ENCODE measurements at regions of chr2 and their contacts with region 1.

Region 1: DNA sequence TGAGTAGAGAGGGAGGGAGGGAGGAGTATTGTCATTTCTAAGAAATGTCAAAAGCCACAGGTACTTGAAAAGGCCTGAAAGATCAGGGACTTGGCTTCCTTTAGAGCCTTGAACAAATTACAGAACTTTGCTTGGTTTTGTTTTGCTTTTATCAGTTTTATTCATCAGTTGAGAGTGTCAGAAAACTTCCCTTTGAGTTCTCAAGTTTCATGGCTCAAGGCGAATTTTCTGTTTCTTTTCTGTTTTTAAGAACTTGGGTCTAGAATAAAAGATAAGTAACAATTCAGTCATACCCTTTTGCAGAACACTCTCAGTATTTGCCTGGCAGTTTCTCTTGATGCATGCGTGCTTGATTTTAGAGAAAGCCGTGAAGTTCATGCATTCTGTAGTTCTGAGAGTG is 531.9 kb downstream of the PARD3B start:
- DNase-seq: peak in 7 of 9 donors; percentile 41 to 85 (median 73)
- ATAC-seq: peak; percentile 86
- H3K4me3 ChIP-seq: no peak overlapping the region
- H3K4me3 Mint-ChIP-seq: peak overlapping the region; percentile 38 to 81 (median 70)
- H3K27ac ChIP-seq: peak overlapping the region; percentile 72
- H3K27ac Mint-ChIP-seq: peak overlapping the region; percentile 81 to 99 (median 94)
- H3K4me1 ChIP-seq: peaks cover 0 to 30% of the 10 kb centered on the region in 2 donors
- H3K4me1 Mint-ChIP-seq: peaks cover 23 to 82% (median 73%) of the 10 kb centered on the region in 7 donors
- H3K27me3 ChIP-seq: no peaks in the 10 kb centered on the region
- H3K27me3 Mint-ChIP-seq: no peaks in the 10 kb centered on the region

Region 2: GRCh38 chr2:204950671-204951346 is 126.3 kb before region 1 on chr2:
- CTCF ChIA-PET with region 1: no interaction called
- POLR2A ChIA-PET with region 1: no interaction called
- intact Hi-C with region 1: loop called (anchors 1 to 5 kb)
- DNase-seq: no peak
- ATAC-seq: no peak
- H3K4me3 ChIP-seq: no peak overlapping the region
- H3K4me3 Mint-ChIP-seq: peak overlapping the region in 1 of 10 donors; percentile 24
- H3K27ac ChIP-seq: no peak overlapping the region
- H3K27ac Mint-ChIP-seq: peak overlapping the region in 7 of 9 donors; percentile 27 to 84 (median 73)
- H3K4me1 ChIP-seq: peaks cover 6 to 37% of the 10 kb centered on the region in 2 donors
- H3K4me1 Mint-ChIP-seq: peaks cover 30 to 76% (median 64%) of the 10 kb centered on the region in 7 donors
- H3K27me3 ChIP-seq: no peaks in the 10 kb centered on the region
- H3K27me3 Mint-ChIP-seq: no peaks in the 10 kb centered on the region

Region 3: DNA sequence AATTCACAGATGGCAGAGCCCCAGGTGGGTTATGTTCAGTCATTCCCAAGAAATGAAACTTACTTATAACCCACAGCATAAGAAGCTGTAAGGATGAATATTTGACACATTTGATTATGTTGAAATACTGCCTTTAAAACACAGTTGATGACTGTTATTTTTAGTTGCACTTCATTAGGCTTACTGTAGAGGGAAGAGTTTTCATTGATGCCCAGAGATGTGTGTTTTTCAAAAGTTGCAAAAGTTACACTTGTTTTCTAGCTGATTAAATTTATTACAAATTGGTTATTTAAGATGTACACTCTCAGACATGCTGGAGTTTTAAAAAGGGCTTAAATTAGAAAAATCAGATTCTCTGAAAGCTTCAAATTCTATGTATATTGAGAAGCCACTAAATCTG is 25.7 kb before region 1 on chr2:
- CTCF ChIA-PET with region 1: interaction called, 3 read pairs
- POLR2A ChIA-PET with region 1: no interaction called
- intact Hi-C with region 1: loop called in 1 of 2 experiments (anchors 2 kb)
- DNase-seq: peak in 4 of 9 donors; percentile 18 to 21 (median 19)
- ATAC-seq: no peak
- H3K4me3 ChIP-seq: no peak overlapping the region
- H3K4me3 Mint-ChIP-seq: no peak overlapping the region
- H3K27ac ChIP-seq: no peak overlapping the region
- H3K27ac Mint-ChIP-seq: no peak overlapping the region
- H3K4me1 ChIP-seq: no peaks in the 10 kb centered on the region
- H3K4me1 Mint-ChIP-seq: peaks cover 2 to 41% (median 32%) of the 10 kb centered on the region in 7 donors
- H3K27me3 ChIP-seq: no peaks in the 10 kb centered on the region
- H3K27me3 Mint-ChIP-seq: no peaks in the 10 kb centered on the region

Region 4: DNA sequence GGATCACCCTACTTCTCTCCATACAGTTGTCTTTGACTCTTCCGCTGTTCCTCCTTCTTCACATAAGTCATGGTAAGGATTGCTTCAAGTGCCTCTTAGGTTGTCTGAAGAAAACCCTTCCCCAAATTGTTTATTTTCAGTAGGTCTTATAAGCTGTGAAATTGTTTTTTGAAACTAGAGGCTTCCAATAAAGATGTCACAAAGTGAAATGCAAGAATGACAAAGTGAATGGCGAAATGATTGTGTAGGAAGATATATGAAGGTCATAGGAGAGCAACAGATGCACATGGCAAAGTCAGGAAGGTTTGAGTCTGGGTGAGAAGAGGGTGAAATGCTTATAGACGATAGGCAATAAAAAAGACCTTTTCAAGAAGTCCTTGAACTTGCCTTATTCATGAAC is 16.9 kb after region 1 on chr2:
- CTCF ChIA-PET with region 1: interaction called, 4 read pairs
- POLR2A ChIA-PET with region 1: no interaction called
- intact Hi-C with region 1: loop called in 1 of 2 experiments (anchors 2 kb)
- DNase-seq: no peak
- ATAC-seq: no peak
- H3K4me3 ChIP-seq: no peak overlapping the region
- H3K4me3 Mint-ChIP-seq: peak overlapping the region in 1 of 10 donors; percentile 1
- H3K27ac ChIP-seq: no peak overlapping the region
- H3K27ac Mint-ChIP-seq: peak overlapping the region in 2 of 9 donors; percentile 9 to 45
- H3K4me1 ChIP-seq: peaks cover 0 to 18% of the 10 kb centered on the region in 2 donors
- H3K4me1 Mint-ChIP-seq: peaks cover 13 to 69% (median 49%) of the 10 kb centered on the region in 7 donors
- H3K27me3 ChIP-seq: no peaks in the 10 kb centered on the region
- H3K27me3 Mint-ChIP-seq: peaks cover 0 to 2% (median 0%) of the 10 kb centered on the region in 5 donors

Region 5: DNA sequence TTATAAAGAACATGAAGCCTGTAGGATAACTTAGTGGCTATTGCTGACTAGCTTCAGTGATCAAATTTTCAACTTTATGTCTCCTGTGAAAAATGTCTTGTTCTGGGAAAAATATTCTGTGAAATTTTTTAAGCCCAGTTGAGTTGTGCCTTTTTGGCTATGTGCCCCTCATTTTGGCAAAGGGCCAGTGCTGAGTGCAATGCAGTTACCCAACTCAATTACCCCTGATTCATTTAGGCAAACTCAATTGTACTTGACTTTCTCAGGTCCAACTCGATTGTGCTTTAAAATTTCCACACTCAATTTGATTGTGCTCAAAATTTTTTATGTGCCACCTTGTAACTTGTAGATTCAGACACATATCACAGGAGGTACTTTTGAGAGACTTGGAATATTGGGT is 56.4 kb after region 1 on chr2:
- CTCF ChIA-PET with region 1: interaction called, 4 read pairs
- POLR2A ChIA-PET with region 1: no interaction called
- intact Hi-C with region 1: loop called in 1 of 2 experiments (anchors 1 kb)
- DNase-seq: no peak
- ATAC-seq: no peak
- H3K4me3 ChIP-seq: no peak overlapping the region
- H3K4me3 Mint-ChIP-seq: no peak overlapping the region
- H3K27ac ChIP-seq: no peak overlapping the region
- H3K27ac Mint-ChIP-seq: no peak overlapping the region
- H3K4me1 ChIP-seq: peaks cover 0 to 16% of the 10 kb centered on the region in 2 donors
- H3K4me1 Mint-ChIP-seq: peaks cover 13 to 31% (median 23%) of the 10 kb centered on the region in 7 donors
- H3K27me3 ChIP-seq: no peaks in the 10 kb centered on the region
- H3K27me3 Mint-ChIP-seq: no peaks in the 10 kb centered on the region

Measured in naive thymus-derived CD4-positive, alpha-beta T cell (primary cell).